ENCODE measurements at regions of chr1 and their contacts with region 1.

Region 1: GRCh38 chr1:223683586-223684487 is 18.3 kb upstream of the CAPN8 start:
- DNase-seq: peak; percentile 39 to 77 (median 50)
- ATAC-seq: peak; percentile 73
- H3K4me3 ChIP-seq: no peak overlapping the region
- H3K4me3 Mint-ChIP-seq: no peak overlapping the region
- H3K27ac ChIP-seq: no peak overlapping the region
- H3K27ac Mint-ChIP-seq: no peak overlapping the region
- H3K4me1 ChIP-seq: peaks cover 2% of the 10 kb centered on the region
- H3K4me1 Mint-ChIP-seq: no peaks in the 10 kb centered on the region
- H3K27me3 ChIP-seq: peaks cover 0 to 2% of the 10 kb centered on the region in 2 experiments
- H3K27me3 Mint-ChIP-seq: peaks cover 16% of the 10 kb centered on the region
- CTCF ChIP-seq: peak; percentile 65

Region 2: GRCh38 chr1:222465211-222466041 is 1218.4 kb before region 1 on chr1:
- CTCF ChIA-PET with region 1: no interaction called
- POLR2A ChIA-PET with region 1: no interaction called
- intact Hi-C with region 1: loop called (anchors 2 to 10 kb)
- DNase-seq: peak; percentile 49 to 89 (median 72)
- ATAC-seq: peak; percentile 91
- H3K4me3 ChIP-seq: peak overlapping the region; percentile 69
- H3K4me3 Mint-ChIP-seq: peak overlapping the region; percentile 94
- H3K27ac ChIP-seq: peak overlapping the region; percentile 25 to 34
- H3K27ac Mint-ChIP-seq: peak overlapping the region; percentile 93
- H3K4me1 ChIP-seq: peaks cover 10% of the 10 kb centered on the region
- H3K4me1 Mint-ChIP-seq: peaks cover 19% of the 10 kb centered on the region
- H3K27me3 ChIP-seq: no peaks in the 10 kb centered on the region
- H3K27me3 Mint-ChIP-seq: peaks cover 5% of the 10 kb centered on the region
- CTCF ChIP-seq: peak; percentile 100

Region 3: GRCh38 chr1:222736972-222737371 is 946.9 kb before region 1 on chr1 and contains the start of gene FAM177B:
- CTCF ChIA-PET with region 1: no interaction called
- POLR2A ChIA-PET with region 1: no interaction called
- intact Hi-C with region 1: loop called (anchors 2 to 5 kb)
- DNase-seq: no peak
- ATAC-seq: no peak
- H3K4me3 ChIP-seq: no peak within 1 kb of the TSS
- H3K4me3 Mint-ChIP-seq: no peak within 1 kb of the TSS
- H3K27ac ChIP-seq: no peak within 1 kb of the TSS
- H3K27ac Mint-ChIP-seq: no peak within 1 kb of the TSS
- H3K4me1 ChIP-seq: no peaks in the 10 kb centered on the region
- H3K4me1 Mint-ChIP-seq: no peaks in the 10 kb centered on the region
- H3K27me3 ChIP-seq: no peaks in the 10 kb centered on the region
- H3K27me3 Mint-ChIP-seq: no peaks in the 10 kb centered on the region
- CTCF ChIP-seq: no peak
- total RNA-seq, gene FAM177B: not detected

Region 4: GRCh38 chr1:222792744-222793143 is 891.1 kb before region 1 on chr1:
- CTCF ChIA-PET with region 1: no interaction called
- POLR2A ChIA-PET with region 1: no interaction called
- intact Hi-C with region 1: loop called (anchors 1 to 5 kb)
- DNase-seq: peak in 3 of 14 experiments; percentile 23 to 41 (median 38)
- ATAC-seq: no peak
- H3K4me3 ChIP-seq: no peak overlapping the region
- H3K4me3 Mint-ChIP-seq: no peak overlapping the region
- H3K27ac ChIP-seq: no peak overlapping the region
- H3K27ac Mint-ChIP-seq: no peak overlapping the region
- H3K4me1 ChIP-seq: no peaks in the 10 kb centered on the region
- H3K4me1 Mint-ChIP-seq: no peaks in the 10 kb centered on the region
- H3K27me3 ChIP-seq: no peaks in the 10 kb centered on the region
- H3K27me3 Mint-ChIP-seq: no peaks in the 10 kb centered on the region
- CTCF ChIP-seq: peak; percentile 74

Region 5: GRCh38 chr1:223831755-223832636 is 148.2 kb after region 1 on chr1:
- CTCF ChIA-PET with region 1: no interaction called
- POLR2A ChIA-PET with region 1: no interaction called
- intact Hi-C with region 1: no loop called
- DNase-seq: peak in 3 of 14 experiments; percentile 50 to 71 (median 65)
- ATAC-seq: peak; percentile 69
- H3K4me3 ChIP-seq: no peak overlapping the region
- H3K4me3 Mint-ChIP-seq: peak overlapping the region; percentile 39
- H3K27ac ChIP-seq: peak overlapping the region; percentile 64 to 69
- H3K27ac Mint-ChIP-seq: no peak overlapping the region
- H3K4me1 ChIP-seq: peaks cover 36% of the 10 kb centered on the region
- H3K4me1 Mint-ChIP-seq: peaks cover 18% of the 10 kb centered on the region
- H3K27me3 ChIP-seq: no peaks in the 10 kb centered on the region
- H3K27me3 Mint-ChIP-seq: no peaks in the 10 kb centered on the region
- CTCF ChIP-seq: peak; percentile 16

Region 6: GRCh38 chr1:223886516-223886921 is 202.7 kb after region 1 on chr1:
- CTCF ChIA-PET with region 1: no interaction called
- POLR2A ChIA-PET with region 1: no interaction called
- intact Hi-C with region 1: no loop called
- DNase-seq: no peak
- ATAC-seq: no peak
- H3K4me3 ChIP-seq: no peak overlapping the region
- H3K4me3 Mint-ChIP-seq: no peak overlapping the region
- H3K27ac ChIP-seq: no peak overlapping the region
- H3K27ac Mint-ChIP-seq: no peak overlapping the region
- H3K4me1 ChIP-seq: no peaks in the 10 kb centered on the region
- H3K4me1 Mint-ChIP-seq: no peaks in the 10 kb centered on the region
- H3K27me3 ChIP-seq: no peaks in the 10 kb centered on the region
- H3K27me3 Mint-ChIP-seq: no peaks in the 10 kb centered on the region
- CTCF ChIP-seq: no peak

Measured in CD4-positive, alpha-beta T cell (primary cell).